OCI-LY7 (cell line): ENCODE measurements at regions of chr17 and their contacts with region 1.

Region 1: GRCh38 chr17:57604771-57605674 is 140.1 kb downstream of the CCDC182 start:
- DNase-seq: peak; percentile 92
- H3K4me3 ChIP-seq: peak overlapping the region; percentile 4
- H3K27ac ChIP-seq: peak overlapping the region; percentile 89
- H3K4me1 ChIP-seq: peaks cover 73% of the 10 kb centered on the region
- CTCF ChIP-seq: peak; percentile 67

Region 2: GRCh38 chr17:57622683-57623433 is 17.8 kb after region 1 on chr17:
- CTCF ChIA-PET with region 1: interaction called, 6 read pairs
- POLR2A ChIA-PET with region 1: interaction called, 36 read pairs
- intact Hi-C with region 1: loop called (anchors 1 kb)
- DNase-seq: peak; percentile 88
- H3K4me3 ChIP-seq: peak overlapping the region; percentile 50
- H3K27ac ChIP-seq: peak overlapping the region; percentile 76
- H3K4me1 ChIP-seq: peaks cover 52% of the 10 kb centered on the region
- CTCF ChIP-seq: no peak

Region 3: GRCh38 chr17:57636985-57637665 is 32.1 kb after region 1 on chr17:
- CTCF ChIA-PET with region 1: no interaction called
- POLR2A ChIA-PET with region 1: interaction called, 3 read pairs
- intact Hi-C with region 1: loop called (anchors 2 kb)
- DNase-seq: peak; percentile 76
- H3K4me3 ChIP-seq: peak overlapping the region; percentile 51
- H3K27ac ChIP-seq: peak overlapping the region; percentile 94
- H3K4me1 ChIP-seq: peaks cover 42% of the 10 kb centered on the region
- CTCF ChIP-seq: no peak

Region 4: GRCh38 chr17:57739402-57740392 is 134.7 kb after region 1 on chr17:
- CTCF ChIA-PET with region 1: no interaction called
- POLR2A ChIA-PET with region 1: no interaction called
- intact Hi-C with region 1: loop called (anchors 1 kb)
- DNase-seq: peak; percentile 69
- H3K4me3 ChIP-seq: no peak overlapping the region
- H3K27ac ChIP-seq: no peak overlapping the region
- H3K4me1 ChIP-seq: peaks cover 22% of the 10 kb centered on the region
- CTCF ChIP-seq: peak; percentile 83